HCT116 (cell line): ENCODE measurements at regions of chr2 and their contacts with region 1.

Region 1: GRCh38 chr2:204325468-204325867 is 219.8 kb upstream of the PARD3B start:
- DNase-seq: peak; percentile 62
- ATAC-seq: peak; percentile 91
- H3K4me3 ChIP-seq: no peak overlapping the region
- H3K27ac ChIP-seq: no peak overlapping the region
- H3K4me1 ChIP-seq: no peaks in the 10 kb centered on the region
- H3K27me3 ChIP-seq: no peaks in the 10 kb centered on the region
- CTCF ChIP-seq: peak; percentile 58 to 87 (median 72); a peak in 5 of 6 replicates
- POLR2A ChIP-seq: no peak
- RAD21 ChIP-seq: peak; percentile 88

Region 2: GRCh38 chr2:204234879-204235278 is 90.6 kb before region 1 on chr2:
- CTCF ChIA-PET with region 1: no interaction called
- POLR2A ChIA-PET with region 1: no interaction called
- RAD21 ChIA-PET with region 1: no interaction called
- intact Hi-C with region 1: no loop called
- DNase-seq: no peak
- ATAC-seq: no peak
- H3K4me3 ChIP-seq: no peak overlapping the region
- H3K27ac ChIP-seq: no peak overlapping the region
- H3K4me1 ChIP-seq: no peaks in the 10 kb centered on the region
- H3K27me3 ChIP-seq: peaks cover 8% of the 10 kb centered on the region; the same call in 1 of the 2 replicates
- CTCF ChIP-seq: no peak
- POLR2A ChIP-seq: no peak
- RAD21 ChIP-seq: no peak

Region 3: GRCh38 chr2:204260162-204260877 is 65.1 kb before region 1 on chr2:
- CTCF ChIA-PET with region 1: no interaction called
- POLR2A ChIA-PET with region 1: no interaction called
- RAD21 ChIA-PET with region 1: no interaction called
- intact Hi-C with region 1: loop called (anchors 1 kb)
- DNase-seq: peak; percentile 65
- ATAC-seq: peak; percentile 91
- H3K4me3 ChIP-seq: no peak overlapping the region
- H3K27ac ChIP-seq: no peak overlapping the region
- H3K4me1 ChIP-seq: peaks cover 3 to 9% of the 10 kb centered on the region in 2 experiments; a peak in 3 of 4 replicates
- H3K27me3 ChIP-seq: no peaks in the 10 kb centered on the region
- CTCF ChIP-seq: peak; percentile 69 to 84 (median 81)
- POLR2A ChIP-seq: no peak
- RAD21 ChIP-seq: peak; percentile 70

Region 4: GRCh38 chr2:204415406-204416181 is 90.1 kb after region 1 on chr2:
- CTCF ChIA-PET with region 1: no interaction called
- POLR2A ChIA-PET with region 1: no interaction called
- RAD21 ChIA-PET with region 1: no interaction called
- intact Hi-C with region 1: no loop called
- DNase-seq: no peak
- ATAC-seq: no peak
- H3K4me3 ChIP-seq: no peak overlapping the region
- H3K27ac ChIP-seq: no peak overlapping the region
- H3K4me1 ChIP-seq: no peaks in the 10 kb centered on the region
- H3K27me3 ChIP-seq: no peaks in the 10 kb centered on the region
- CTCF ChIP-seq: no peak
- POLR2A ChIP-seq: no peak
- RAD21 ChIP-seq: no peak

Region 5: DNA sequence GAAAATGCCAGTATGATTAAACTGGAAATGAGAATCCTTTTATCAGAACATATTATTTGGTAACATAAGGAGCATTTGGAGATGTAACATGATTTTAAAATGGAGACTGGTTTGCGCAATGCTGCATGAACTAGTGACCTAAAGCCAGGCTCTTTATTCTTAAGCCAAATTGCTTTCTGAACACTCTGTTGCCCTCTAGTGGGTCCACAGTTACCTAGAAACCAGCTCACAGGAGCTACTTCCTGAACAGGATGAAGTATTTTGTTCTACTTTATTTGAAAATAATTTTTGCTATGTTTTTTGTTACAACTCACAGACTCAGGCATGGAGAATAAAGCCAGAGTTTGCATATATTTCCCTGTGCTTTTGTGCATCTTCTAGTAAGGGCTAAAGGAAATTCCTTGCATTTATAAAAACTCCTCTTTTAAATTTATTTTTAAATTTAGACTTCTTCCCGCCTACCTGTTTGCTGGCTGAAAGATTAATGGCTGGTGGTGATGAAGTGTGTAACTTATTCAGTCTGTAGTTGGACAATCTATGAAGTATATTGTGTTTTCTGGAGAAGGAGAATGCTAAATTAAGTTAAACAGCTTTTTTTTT is 366.5 kb after region 1 on chr2:
- CTCF ChIA-PET with region 1: no interaction called
- POLR2A ChIA-PET with region 1: no interaction called
- RAD21 ChIA-PET with region 1: no interaction called
- intact Hi-C with region 1: loop called (anchors 5 kb)
- DNase-seq: peak; percentile 10
- ATAC-seq: no peak
- H3K4me3 ChIP-seq: no peak overlapping the region
- H3K27ac ChIP-seq: no peak overlapping the region
- H3K4me1 ChIP-seq: no peaks in the 10 kb centered on the region
- H3K27me3 ChIP-seq: no peaks in the 10 kb centered on the region
- CTCF ChIP-seq: peak; percentile 9 to 34 (median 31); a peak in 3 of 6 replicates
- POLR2A ChIP-seq: no peak
- RAD21 ChIP-seq: peak; percentile 39; the same call in 1 of the 2 replicates

Region 6: DNA sequence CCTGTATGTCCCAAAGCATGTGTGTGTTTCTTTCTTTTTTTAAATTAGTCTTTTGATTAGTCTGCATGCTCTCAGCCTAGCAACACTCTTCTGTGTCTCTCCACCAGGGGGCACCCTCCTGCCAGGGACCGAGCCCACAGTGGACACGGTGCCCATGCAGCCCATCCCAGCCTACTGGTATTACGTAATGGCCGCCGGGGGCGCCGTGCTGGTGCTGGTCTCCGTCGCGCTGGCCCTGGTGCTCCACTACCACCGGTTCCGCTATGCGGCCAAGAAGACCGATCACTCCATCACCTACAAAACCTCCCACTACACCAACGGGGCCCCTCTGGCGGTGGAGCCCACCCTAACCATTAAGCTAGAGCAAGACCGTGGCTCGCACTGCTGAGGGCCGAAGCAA is 1450.7 kb after region 1 on chr2:
- CTCF ChIA-PET with region 1: no interaction called
- POLR2A ChIA-PET with region 1: no interaction called
- RAD21 ChIA-PET with region 1: no interaction called
- intact Hi-C with region 1: loop called (anchors 10 kb)
- DNase-seq: peak; percentile 55
- ATAC-seq: peak; percentile 98
- H3K4me3 ChIP-seq: no peak overlapping the region
- H3K27ac ChIP-seq: no peak overlapping the region
- H3K4me1 ChIP-seq: peaks cover 0 to 3% of the 10 kb centered on the region in 2 experiments; a peak in 1 of 4 replicates
- H3K27me3 ChIP-seq: peaks cover 21% of the 10 kb centered on the region; the same call in 1 of the 2 replicates
- CTCF ChIP-seq: peak; percentile 83 to 92 (median 89)
- POLR2A ChIP-seq: no peak
- RAD21 ChIP-seq: peak; percentile 84

Region 7: GRCh38 chr2:205885492-205886099 is 1560.1 kb after region 1 on chr2:
- CTCF ChIA-PET with region 1: no interaction called
- POLR2A ChIA-PET with region 1: no interaction called
- RAD21 ChIA-PET with region 1: no interaction called
- intact Hi-C with region 1: loop called (anchors 1 kb)
- DNase-seq: peak; percentile 68
- ATAC-seq: peak; percentile 99
- H3K4me3 ChIP-seq: no peak overlapping the region
- H3K27ac ChIP-seq: no peak overlapping the region
- H3K4me1 ChIP-seq: peaks cover 0 to 3% of the 10 kb centered on the region in 2 experiments; a peak in 2 of 4 replicates
- H3K27me3 ChIP-seq: no peaks in the 10 kb centered on the region
- CTCF ChIP-seq: peak; percentile 92 to 97 (median 94)
- POLR2A ChIP-seq: no peak
- RAD21 ChIP-seq: peak; percentile 94

Region 8: GRCh38 chr2:205925373-205926337 is 1600.2 kb after region 1 on chr2:
- CTCF ChIA-PET with region 1: no interaction called
- POLR2A ChIA-PET with region 1: no interaction called
- RAD21 ChIA-PET with region 1: no interaction called
- intact Hi-C with region 1: loop called (anchors 5 kb)
- DNase-seq: no peak
- ATAC-seq: peak; percentile 99
- H3K4me3 ChIP-seq: peak overlapping the region; percentile 9 to 19; a peak in 1 of 4 replicates
- H3K27ac ChIP-seq: no peak overlapping the region
- H3K4me1 ChIP-seq: peaks cover 0 to 8% of the 10 kb centered on the region in 2 experiments; a peak in 2 of 4 replicates
- H3K27me3 ChIP-seq: peaks cover 25% of the 10 kb centered on the region
- CTCF ChIP-seq: peak; percentile 85 to 93 (median 90)
- POLR2A ChIP-seq: no peak
- RAD21 ChIP-seq: peak; percentile 95

Region 9: GRCh38 chr2:205947621-205948495 is 1622.4 kb after region 1 on chr2:
- CTCF ChIA-PET with region 1: no interaction called
- POLR2A ChIA-PET with region 1: no interaction called
- RAD21 ChIA-PET with region 1: no interaction called
- intact Hi-C with region 1: loop called (anchors 1 kb)
- DNase-seq: peak; percentile 33
- ATAC-seq: peak; percentile 85
- H3K4me3 ChIP-seq: no peak overlapping the region
- H3K27ac ChIP-seq: no peak overlapping the region
- H3K4me1 ChIP-seq: peaks cover 0 to 17% of the 10 kb centered on the region in 2 experiments; a peak in 2 of 4 replicates
- H3K27me3 ChIP-seq: no peaks in the 10 kb centered on the region
- CTCF ChIP-seq: peak; percentile 81 to 95 (median 91)
- POLR2A ChIP-seq: no peak
- RAD21 ChIP-seq: peak; percentile 88